Mammary epithelial cell (primary cell): ENCODE measurements at regions of chr5 and their contacts with region 1.

Region 1: DNA sequence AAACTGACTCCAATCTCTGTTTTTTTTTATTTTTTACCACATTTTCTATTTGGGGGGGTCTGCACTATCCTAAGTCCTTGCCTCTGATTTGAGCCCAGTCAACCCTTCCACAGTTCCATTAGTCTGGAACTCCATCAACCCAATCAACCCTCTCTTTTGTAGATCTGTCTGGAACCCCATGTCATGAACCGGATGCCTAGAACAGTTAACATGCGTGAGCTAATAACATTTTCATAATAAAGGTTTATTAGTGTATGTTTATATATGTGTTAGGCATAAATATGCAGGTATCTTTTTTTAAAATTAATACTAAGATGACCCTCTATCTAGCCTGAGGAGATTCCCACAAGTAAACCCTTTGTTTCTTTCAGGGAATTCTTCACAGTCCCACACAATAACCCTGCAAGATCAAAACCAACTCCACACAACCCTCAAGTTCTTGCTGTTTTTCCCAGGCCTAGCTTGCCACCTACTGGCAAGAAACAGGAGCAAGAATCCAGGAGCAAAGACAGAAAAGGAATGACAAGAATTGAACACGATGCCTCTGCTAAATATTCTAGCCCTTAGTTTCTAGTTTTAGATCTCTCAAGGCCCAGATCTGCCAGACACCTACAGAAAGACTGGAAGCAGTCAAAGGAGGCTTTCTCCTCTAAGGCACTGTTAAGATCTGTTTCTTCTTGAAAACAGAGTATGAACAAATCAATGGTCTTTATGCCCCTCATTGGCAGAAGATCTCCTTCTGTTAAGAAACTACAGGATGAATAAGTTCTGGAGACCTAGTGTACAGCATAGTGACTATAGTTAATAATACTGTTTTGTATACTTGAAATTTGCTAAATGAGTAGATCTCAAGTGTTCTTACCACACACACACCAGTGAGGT is 100.4 kb downstream of the TRIM36 start:
- DNase-seq: peak; percentile 45
- H3K4me3 ChIP-seq: no peak overlapping the region
- H3K27ac ChIP-seq: no peak overlapping the region
- H3K4me1 ChIP-seq: no peaks in the 10 kb centered on the region
- H3K27me3 ChIP-seq: no peaks in the 10 kb centered on the region
- CTCF ChIP-seq: peak; percentile 73 to 86

Region 2: GRCh38 chr5:113612060-113612496 is 1457.2 kb before region 1 on chr5:
- CTCF ChIA-PET with region 1: no interaction called
- dilution Hi-C with region 1: no loop called
- in situ Hi-C with region 1: no loop called
- intact Hi-C with region 1: loop called (anchors 2 kb)
- DNase-seq: peak; percentile 30
- H3K4me3 ChIP-seq: no peak overlapping the region
- H3K27ac ChIP-seq: no peak overlapping the region
- H3K4me1 ChIP-seq: peaks cover 7% of the 10 kb centered on the region
- H3K27me3 ChIP-seq: no peaks in the 10 kb centered on the region
- CTCF ChIP-seq: peak; percentile 58 to 62

Region 3: GRCh38 chr5:113678924-113679575 is 1390.3 kb before region 1 on chr5:
- CTCF ChIA-PET with region 1: no interaction called
- dilution Hi-C with region 1: no loop called
- in situ Hi-C with region 1: no loop called
- intact Hi-C with region 1: loop called (anchors 10 kb)
- DNase-seq: peak; percentile 36
- H3K4me3 ChIP-seq: no peak overlapping the region
- H3K27ac ChIP-seq: no peak overlapping the region
- H3K4me1 ChIP-seq: no peaks in the 10 kb centered on the region
- H3K27me3 ChIP-seq: no peaks in the 10 kb centered on the region
- CTCF ChIP-seq: peak; percentile 79 to 82

Region 4: GRCh38 chr5:114101153-114101552 is 968.2 kb before region 1 on chr5:
- CTCF ChIA-PET with region 1: no interaction called
- dilution Hi-C with region 1: no loop called
- in situ Hi-C with region 1: no loop called
- intact Hi-C with region 1: loop called (anchors 2 kb)
- DNase-seq: peak; percentile 17
- H3K4me3 ChIP-seq: no peak overlapping the region
- H3K27ac ChIP-seq: no peak overlapping the region
- H3K4me1 ChIP-seq: no peaks in the 10 kb centered on the region
- H3K27me3 ChIP-seq: no peaks in the 10 kb centered on the region
- CTCF ChIP-seq: peak; percentile 75 to 76

Region 5: GRCh38 chr5:114361724-114362196 is 707.6 kb before region 1 on chr5 and contains the start of gene KCNN2:
- CTCF ChIA-PET with region 1: no interaction called
- dilution Hi-C with region 1: no loop called
- in situ Hi-C with region 1: no loop called
- intact Hi-C with region 1: loop called (anchors 5 kb)
- DNase-seq: peak; percentile 39
- H3K4me3 ChIP-seq: peak within 1 kb of the TSS in 2 of 3 experiments; percentile 20 to 22
- H3K27ac ChIP-seq: no peak within 1 kb of the TSS
- H3K4me1 ChIP-seq: peaks cover 6% of the 10 kb centered on the region
- H3K27me3 ChIP-seq: peaks cover 37% of the 10 kb centered on the region
- CTCF ChIP-seq: no peak
- total RNA-seq, gene KCNN2: not detected

Region 6: GRCh38 chr5:114803353-114803752 is 266.0 kb before region 1 on chr5:
- CTCF ChIA-PET with region 1: no interaction called
- dilution Hi-C with region 1: no loop called
- in situ Hi-C with region 1: no loop called
- intact Hi-C with region 1: loop called (anchors 5 kb)
- DNase-seq: no peak
- H3K4me3 ChIP-seq: no peak overlapping the region
- H3K27ac ChIP-seq: no peak overlapping the region
- H3K4me1 ChIP-seq: no peaks in the 10 kb centered on the region
- H3K27me3 ChIP-seq: no peaks in the 10 kb centered on the region
- CTCF ChIP-seq: no peak